ENCODE measurements at regions of chr6 and their contacts with region 1.

Region 1: DNA sequence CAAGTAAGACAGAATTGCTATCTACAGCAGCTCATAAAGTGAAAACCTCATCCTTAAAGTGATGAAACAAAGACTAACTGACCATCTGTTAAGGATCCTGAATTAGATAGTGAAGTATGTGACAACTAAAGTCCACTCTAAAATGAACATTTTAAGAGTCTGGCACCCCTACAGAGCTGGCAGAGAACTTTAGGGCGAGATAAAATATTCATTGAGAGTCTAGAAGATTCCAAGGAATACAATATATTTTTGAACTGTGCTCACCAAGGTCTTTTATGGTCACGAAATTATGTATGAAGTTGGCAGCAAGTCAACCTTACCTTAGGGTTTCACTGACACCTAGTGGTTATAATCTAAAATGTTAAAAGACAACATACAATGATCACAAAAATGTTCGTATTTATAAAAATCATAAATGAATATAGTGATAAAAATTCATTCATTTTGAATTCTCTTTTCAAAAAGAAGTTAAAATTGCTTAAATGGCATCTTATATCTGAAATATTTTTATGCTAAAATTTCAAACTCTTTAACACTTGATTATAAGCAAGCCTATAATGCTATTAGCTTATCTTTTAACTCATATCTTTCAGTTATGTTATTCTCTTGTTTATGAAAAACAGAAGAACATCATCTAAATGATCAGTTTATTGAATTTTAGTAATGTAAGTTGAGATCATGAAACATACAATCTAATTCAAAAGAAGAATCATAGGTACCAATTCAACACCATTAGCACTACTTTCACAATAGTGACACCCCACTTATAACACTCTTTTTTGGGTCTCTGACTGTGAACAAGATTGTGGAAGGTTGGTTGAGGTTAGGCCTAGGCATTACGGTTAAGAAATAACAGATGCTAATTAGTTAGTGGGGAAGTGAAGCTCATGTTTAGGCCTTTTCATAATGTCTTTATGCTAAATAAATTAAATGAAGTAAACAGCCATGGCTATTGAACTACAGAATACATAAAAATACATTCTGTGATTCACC is 27.5 kb downstream of the RSPH3 start:
- DNase-seq: no peak
- ATAC-seq: peak in 1 of 2 donors; percentile 26
- H3K4me3 ChIP-seq: no peak overlapping the region
- H3K27ac ChIP-seq: no peak overlapping the region
- H3K4me1 ChIP-seq: no peaks in the 10 kb centered on the region
- H3K27me3 ChIP-seq: no peaks in the 10 kb centered on the region

Region 2: DNA sequence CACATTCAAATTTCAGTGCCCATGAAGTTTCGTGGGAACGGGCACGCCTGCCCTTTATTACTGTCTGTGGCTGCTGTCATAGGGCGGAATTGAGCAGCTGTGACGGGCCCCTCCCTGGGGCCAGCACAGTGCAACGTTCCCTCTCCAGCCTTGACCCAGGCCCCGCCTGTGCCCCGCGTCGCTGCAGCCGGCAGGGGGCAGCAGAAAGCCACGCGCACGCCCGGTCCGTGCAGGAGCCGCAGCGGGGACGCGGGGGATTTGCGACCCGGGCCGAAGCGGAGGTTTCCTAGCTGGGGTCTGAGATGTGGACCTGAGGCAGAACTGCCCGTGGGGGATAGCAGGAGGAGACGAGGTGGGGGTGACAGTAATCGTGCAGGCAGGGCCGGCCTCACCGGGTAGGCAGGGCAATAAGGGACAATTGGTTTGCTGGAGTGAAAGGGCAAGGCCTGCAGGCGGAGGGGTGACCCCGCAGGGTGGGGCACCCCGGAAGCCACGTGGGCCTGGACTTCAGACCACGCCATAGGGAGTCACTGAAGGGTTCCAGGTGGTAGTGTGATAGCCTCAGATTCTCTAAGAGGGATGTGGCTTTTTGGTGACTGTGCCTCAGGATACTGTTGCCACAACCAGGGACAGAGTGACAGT is 268.2 kb before region 1 on chr6:
- intact Hi-C with region 1: loop called in 3 of 4 experiments (anchors 2 to 5 kb)
- DNase-seq: peak; percentile 88 to 95 (median 95)
- ATAC-seq: peak; percentile 89 to 90
- H3K4me3 ChIP-seq: peak overlapping the region; percentile 15
- H3K27ac ChIP-seq: peak overlapping the region; percentile 3
- H3K4me1 ChIP-seq: peaks cover 10% of the 10 kb centered on the region
- H3K27me3 ChIP-seq: no peaks in the 10 kb centered on the region

Region 3: DNA sequence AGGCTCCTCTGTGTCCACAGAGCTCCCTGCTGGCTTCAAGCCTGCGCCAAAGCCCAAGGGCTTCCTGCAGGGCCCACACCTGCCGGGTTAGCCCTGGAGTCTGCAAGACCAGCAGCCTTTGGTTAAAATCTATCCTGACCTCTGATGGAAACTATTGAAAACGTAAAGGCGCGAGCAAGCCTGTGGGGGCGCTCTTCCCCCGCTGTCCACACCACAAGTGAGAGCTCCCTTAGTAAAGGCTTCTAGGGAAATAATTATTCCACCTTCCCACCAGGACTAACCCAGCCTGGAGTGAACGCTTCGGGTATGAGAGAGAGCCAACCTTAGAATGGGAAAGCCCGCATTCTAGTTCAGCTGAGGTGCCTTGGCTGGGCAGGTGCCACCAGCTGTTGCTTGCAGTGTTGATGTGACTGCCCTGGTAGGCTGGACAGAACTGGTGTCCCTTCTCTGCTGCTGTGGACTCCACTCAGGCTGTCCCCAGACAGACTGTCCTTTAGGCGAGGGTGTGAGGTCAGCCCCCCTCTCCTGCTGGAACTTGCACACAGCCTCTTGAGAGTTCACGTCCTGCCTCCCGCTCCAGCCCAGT is 254.0 kb before region 1 on chr6:
- intact Hi-C with region 1: loop called in 1 of 4 experiments (anchors 5 kb)
- DNase-seq: peak in 1 of 3 donors; percentile 74
- ATAC-seq: peak; percentile 45 to 67
- H3K4me3 ChIP-seq: no peak overlapping the region
- H3K27ac ChIP-seq: no peak overlapping the region
- H3K4me1 ChIP-seq: no peaks in the 10 kb centered on the region
- H3K27me3 ChIP-seq: no peaks in the 10 kb centered on the region

Region 4: DNA sequence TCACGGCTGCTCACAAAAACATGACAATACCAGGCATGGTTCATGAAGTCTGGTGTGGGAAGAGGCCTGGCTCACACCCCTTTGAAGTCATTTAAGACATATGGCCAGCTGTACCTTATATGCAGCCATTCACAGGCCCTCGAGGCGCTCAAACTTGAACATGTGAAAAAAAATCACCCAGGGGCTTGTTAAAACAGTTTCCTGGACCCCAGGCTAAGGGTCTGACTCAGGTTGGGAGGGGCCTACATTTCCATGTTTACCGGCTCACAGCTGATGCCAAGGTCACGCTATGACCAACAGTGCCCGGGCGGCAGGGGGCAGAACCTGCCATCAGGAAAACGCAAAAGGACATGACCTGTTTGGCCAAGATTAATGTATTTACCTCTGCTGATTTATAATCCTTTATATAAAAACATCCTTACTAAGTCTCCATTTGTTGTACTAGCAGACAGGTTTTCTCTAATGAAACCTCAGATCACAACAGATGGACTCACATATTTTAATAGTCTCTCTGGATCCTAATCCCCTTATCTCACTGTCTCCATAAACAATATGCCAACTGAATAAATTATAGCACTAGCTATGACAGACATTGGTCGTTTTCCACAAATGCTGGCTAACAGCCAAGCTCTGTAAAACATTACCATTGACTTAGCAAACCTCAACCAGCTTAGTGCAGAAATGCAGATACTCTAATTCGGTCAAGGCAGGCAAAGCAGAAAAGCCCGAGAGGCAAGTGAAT is 173.3 kb before region 1 on chr6:
- intact Hi-C with region 1: loop called in 1 of 4 experiments (anchors 5 kb)
- DNase-seq: peak in 1 of 3 donors; percentile 56
- ATAC-seq: peak; percentile 20 to 23
- H3K4me3 ChIP-seq: no peak overlapping the region
- H3K27ac ChIP-seq: peak overlapping the region; percentile 87
- H3K4me1 ChIP-seq: peaks cover 4% of the 10 kb centered on the region
- H3K27me3 ChIP-seq: no peaks in the 10 kb centered on the region

Region 5: DNA sequence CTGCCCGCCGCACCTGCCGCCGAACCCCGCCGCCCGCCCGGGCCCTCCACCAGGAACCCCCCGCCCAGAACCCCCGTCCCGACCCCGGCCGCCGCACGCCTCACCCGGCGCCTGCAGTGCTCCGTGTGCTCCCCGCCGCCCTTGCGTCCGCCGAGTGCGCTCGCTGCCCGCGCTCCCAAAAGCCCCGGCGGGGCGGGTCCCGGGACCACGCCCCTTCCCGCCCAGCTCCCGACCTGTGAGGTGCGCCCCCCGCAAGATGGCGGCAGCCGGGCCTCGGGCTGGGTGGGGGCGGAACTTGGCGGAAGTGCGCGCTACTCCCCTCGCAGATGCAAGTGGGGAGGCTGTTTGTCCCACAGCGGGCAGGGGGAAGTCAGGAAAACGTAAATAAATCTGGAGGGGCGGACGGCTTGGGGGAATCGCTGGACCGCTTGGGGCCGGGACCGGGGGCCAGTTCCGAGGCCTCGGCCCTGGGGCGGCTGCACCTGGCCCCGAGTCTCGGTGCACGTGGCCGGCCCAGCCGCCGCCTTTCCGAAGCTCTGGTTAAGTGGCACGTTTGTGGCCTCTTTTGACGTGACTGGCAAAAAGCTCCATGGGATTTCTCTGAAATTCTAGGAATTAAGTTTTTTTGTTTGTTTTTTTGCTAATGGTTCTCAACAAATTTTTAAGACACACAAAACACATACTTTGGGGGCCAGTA is 153.2 kb before region 1 on chr6 and contains the start of gene EZR:
- intact Hi-C with region 1: loop called in 1 of 4 experiments (anchors 10 kb)
- DNase-seq: peak; percentile 87 to 94 (median 93)
- ATAC-seq: peak; percentile 79 to 84
- H3K4me3 ChIP-seq: peak within 1 kb of the TSS; percentile 94
- H3K27ac ChIP-seq: peak within 1 kb of the TSS; percentile 87
- H3K4me1 ChIP-seq: no peaks in the 10 kb centered on the region
- H3K27me3 ChIP-seq: no peaks in the 10 kb centered on the region
- total RNA-seq, gene EZR: 192 to 261 (median 244) TPM

Region 6: GRCh38 chr6:159616456-159616855 is 643.9 kb after region 1 on chr6:
- intact Hi-C with region 1: no loop called
- DNase-seq: no peak
- ATAC-seq: no peak
- H3K4me3 ChIP-seq: no peak overlapping the region
- H3K27ac ChIP-seq: no peak overlapping the region
- H3K4me1 ChIP-seq: no peaks in the 10 kb centered on the region
- H3K27me3 ChIP-seq: no peaks in the 10 kb centered on the region

Measured in right cardiac atrium (tissue), 5 donors.